ENCODE measurements at regions of chr10 and their contacts with region 1.

Region 1: DNA sequence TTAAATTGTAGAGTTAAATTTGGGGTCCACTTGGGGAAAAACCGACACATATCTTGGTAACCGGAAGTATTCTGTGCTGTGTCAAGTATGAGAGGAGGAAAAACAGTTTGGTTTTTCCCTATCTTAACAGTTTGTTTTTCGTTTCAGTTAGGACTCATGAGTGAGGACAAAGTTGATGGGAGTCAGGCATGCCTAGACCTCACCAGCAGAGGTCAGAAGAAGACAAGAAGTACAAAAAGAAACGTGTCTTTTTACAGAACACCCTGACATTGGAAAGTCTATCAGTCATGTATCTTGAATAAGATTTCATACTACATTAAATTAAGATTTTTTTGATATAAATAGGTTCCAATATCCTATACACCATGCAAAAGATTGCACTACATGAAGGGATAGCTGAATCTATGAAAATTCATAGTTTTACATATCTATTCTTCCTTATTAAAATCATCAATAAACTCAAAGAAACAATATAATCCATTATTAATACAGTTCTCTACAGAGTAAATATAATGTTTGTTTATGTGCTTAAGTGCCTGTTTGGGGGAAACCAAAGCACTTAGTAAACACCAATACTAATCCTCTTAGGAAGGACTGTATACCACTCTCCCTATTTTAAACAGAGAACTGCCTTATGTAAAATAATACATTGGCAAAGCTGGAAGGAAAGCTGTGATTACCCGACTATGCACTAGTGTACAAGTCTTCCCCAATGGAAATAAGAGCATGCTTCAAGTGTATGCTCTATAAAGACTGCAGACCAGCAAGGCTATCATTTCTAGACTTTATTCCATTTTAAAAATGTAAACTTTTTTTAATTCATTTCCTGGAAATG is 95.6 kb downstream of the USP6NL start:
- DNase-seq: peak in 3 of 5 donors; percentile 53 to 85 (median 72)
- H3K4me3 ChIP-seq: no peak overlapping the region
- H3K27ac ChIP-seq: no peak overlapping the region
- H3K4me1 ChIP-seq: no peaks in the 10 kb centered on the region
- H3K27me3 ChIP-seq: no peaks in the 10 kb centered on the region
- CTCF ChIP-seq: peak; percentile 85

Region 2: GRCh38 chr10:11192304-11193000 is 323.4 kb before region 1 on chr10:
- intact Hi-C with region 1: no loop called
- DNase-seq: no peak
- H3K4me3 ChIP-seq: no peak overlapping the region
- H3K27ac ChIP-seq: no peak overlapping the region
- H3K4me1 ChIP-seq: peaks cover 0 to 5% (median 0%) of the 10 kb centered on the region in 3 donors
- H3K27me3 ChIP-seq: no peaks in the 10 kb centered on the region
- CTCF ChIP-seq: no peak

Region 3: DNA sequence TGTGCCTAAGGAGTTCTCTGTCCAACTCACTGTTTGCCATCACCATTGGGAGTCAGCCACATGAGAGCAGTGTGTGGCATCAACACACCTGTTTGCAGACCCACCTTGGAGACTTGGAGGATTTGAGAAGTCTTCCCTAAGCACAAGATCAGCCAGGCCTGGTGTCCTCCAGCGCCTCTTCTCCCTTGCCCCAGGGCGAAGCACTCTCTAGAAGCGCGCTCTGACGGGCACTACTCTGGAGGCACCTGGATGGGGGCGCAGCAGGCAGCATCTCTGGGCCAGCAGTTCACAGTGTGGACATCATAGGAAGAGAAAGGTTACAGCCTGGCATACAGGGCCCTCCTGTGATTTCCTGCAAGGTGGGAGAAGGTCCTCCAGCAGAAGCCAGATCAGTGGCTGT is 208.8 kb before region 1 on chr10:
- intact Hi-C with region 1: no loop called
- DNase-seq: no peak
- H3K4me3 ChIP-seq: no peak overlapping the region
- H3K27ac ChIP-seq: no peak overlapping the region
- H3K4me1 ChIP-seq: no peaks in the 10 kb centered on the region
- H3K27me3 ChIP-seq: no peaks in the 10 kb centered on the region
- CTCF ChIP-seq: no peak

Region 4: GRCh38 chr10:11724938-11725776 is 209.3 kb after region 1 on chr10:
- intact Hi-C with region 1: loop called (anchors 10 kb)
- DNase-seq: peak in 2 of 5 donors; percentile 71 to 81
- H3K4me3 ChIP-seq: no peak overlapping the region
- H3K27ac ChIP-seq: no peak overlapping the region
- H3K4me1 ChIP-seq: no peaks in the 10 kb centered on the region
- H3K27me3 ChIP-seq: no peaks in the 10 kb centered on the region
- CTCF ChIP-seq: peak; percentile 62

Region 5: DNA sequence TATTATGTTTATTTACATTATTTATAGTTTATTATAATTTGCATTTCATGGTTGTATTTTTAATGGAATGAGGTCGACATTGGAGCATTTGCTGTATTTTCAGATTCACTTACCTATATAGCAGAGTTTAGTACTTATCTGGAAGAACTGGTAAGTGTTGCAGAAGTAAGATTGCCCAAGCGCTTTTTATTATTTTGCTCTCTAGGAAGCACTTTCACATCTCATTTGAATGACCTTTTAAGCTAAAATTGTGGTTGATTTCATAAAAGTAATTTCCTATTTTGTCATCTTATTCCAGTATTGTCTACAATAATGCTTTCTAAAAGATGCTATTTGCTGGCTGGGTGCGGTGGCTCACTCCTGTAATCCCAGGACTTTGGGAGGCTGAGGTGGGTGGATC is 642.3 kb after region 1 on chr10:
- intact Hi-C with region 1: no loop called
- DNase-seq: no peak
- H3K4me3 ChIP-seq: no peak overlapping the region
- H3K27ac ChIP-seq: no peak overlapping the region
- H3K4me1 ChIP-seq: no peaks in the 10 kb centered on the region
- H3K27me3 ChIP-seq: no peaks in the 10 kb centered on the region
- CTCF ChIP-seq: no peak